ACHN (cell line): ENCODE measurements at regions of chr10 and their contacts with region 1.

Region 1: GRCh38 chr10:11515596-11516430 is 95.6 kb downstream of the USP6NL start:
- DNase-seq: peak; percentile 65

Region 2: DNA sequence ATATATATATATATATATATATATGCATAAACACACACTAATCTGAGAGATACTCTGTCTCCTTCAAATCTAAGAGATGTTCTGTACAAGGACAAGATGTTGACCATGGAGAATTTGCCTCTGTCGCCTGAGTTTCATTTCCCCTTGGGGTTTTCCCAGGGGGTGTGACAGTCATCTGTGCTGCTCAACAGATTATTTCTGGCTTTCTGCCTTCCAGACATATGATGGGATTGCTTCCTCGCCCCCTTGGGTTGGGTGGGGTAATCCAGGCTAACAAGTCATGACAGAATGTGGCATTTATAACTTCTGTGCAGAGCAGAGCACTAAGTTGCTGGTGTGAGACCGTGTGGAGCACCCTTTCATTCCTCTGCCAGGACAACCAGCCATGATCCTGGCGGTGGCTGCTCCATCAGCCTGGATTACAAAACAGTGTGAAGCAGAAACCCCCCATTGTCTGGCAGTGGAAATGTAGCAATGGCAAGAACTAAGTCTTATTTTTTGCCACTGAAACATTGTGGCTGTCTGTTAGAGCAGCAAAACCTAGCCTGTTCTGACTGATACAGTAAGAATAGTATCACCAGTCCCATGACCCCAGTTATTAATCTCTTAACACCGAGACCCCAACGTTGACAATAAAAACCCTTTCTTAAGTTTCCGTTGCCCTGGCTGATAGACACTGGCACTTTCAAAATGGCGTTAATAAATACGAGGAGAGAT is 109.4 kb after region 1 on chr10:
- in situ Hi-C with region 1: no loop called
- DNase-seq: no peak

Region 3: DNA sequence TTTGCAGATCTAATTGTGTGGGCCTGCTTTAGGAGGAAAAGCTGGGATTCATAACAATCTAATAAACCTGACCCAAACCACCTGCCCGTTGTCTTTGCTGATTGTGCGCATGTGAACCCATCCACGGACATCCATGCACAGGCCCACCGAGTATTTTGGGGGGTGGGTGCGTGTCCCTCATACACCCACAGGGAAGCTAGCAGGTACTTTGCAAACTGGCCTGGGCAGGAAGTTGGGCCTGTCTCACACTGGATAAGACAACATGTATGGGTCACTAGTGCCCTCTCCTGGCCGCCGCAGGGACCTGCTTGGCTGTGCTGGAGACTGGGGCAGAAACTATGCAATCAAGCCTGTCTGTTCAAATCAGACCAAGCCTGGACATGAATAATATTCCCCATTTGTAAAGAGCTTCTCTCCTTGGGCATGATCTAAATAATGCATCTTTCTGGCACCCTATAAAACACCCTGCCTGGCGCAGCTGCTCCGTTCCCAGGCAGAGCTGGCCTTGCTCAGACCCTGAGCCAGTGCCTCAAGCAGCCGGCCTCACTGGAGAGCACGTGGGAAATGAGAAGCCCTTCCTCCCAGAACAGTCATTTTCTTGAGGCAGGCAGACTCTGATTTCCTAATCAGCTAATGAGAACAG is 242.1 kb after region 1 on chr10:
- in situ Hi-C with region 1: loop called (anchors 25 kb)
- DNase-seq: peak; percentile 66